Aorta (tissue), 5 donors: ENCODE measurements at regions of chr20 and their contacts with region 1.

Region 1: GRCh38 chr20:6828794-6829423 is 61.4 kb downstream of the BMP2 start:
- DNase-seq: peak in 1 of 2 donors; percentile 59
- ATAC-seq: peak; percentile 79
- H3K4me3 ChIP-seq: no peak overlapping the region
- H3K27ac ChIP-seq: no peak overlapping the region
- H3K4me1 ChIP-seq: no peaks in the 10 kb centered on the region
- H3K27me3 ChIP-seq: peaks cover 0 to 1% of the 10 kb centered on the region in 2 donors

Region 2: DNA sequence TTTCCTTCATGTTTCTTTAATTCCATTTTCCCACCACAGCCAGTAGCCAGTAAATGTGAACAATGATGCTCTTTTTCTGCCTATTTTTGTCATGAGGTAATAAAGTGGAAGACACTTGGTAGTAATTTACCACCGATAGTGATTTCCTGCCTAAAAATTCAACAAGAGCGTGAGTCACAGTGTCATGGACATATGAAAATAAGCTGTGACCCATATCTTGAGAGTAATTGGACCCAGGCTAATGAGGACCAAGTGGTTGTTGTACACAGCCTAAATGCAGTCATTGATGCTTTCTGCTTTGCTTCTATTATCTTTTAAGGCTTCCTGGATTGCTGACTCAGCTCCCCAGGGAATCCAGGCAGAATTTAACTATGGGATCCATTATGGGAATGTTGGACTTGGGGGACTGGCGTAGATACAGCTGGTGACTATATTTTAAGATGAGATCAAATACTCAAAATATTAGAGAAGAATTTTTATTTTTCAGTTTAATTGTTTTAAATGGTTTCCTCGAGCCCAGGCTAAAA is 440.2 kb before region 1 on chr20:
- intact Hi-C with region 1: no loop called
- DNase-seq: no peak
- ATAC-seq: no peak
- H3K4me3 ChIP-seq: no peak overlapping the region
- H3K27ac ChIP-seq: no peak overlapping the region
- H3K4me1 ChIP-seq: no peaks in the 10 kb centered on the region
- H3K27me3 ChIP-seq: no peaks in the 10 kb centered on the region

Region 3: GRCh38 chr20:6700563-6701329 is 128.2 kb before region 1 on chr20:
- intact Hi-C with region 1: no loop called
- DNase-seq: peak in 1 of 2 donors; percentile 87
- ATAC-seq: no peak
- H3K4me3 ChIP-seq: no peak overlapping the region
- H3K27ac ChIP-seq: no peak overlapping the region
- H3K4me1 ChIP-seq: peaks cover 2 to 6% of the 10 kb centered on the region in 2 donors
- H3K27me3 ChIP-seq: no peaks in the 10 kb centered on the region

Region 4: GRCh38 chr20:6786548-6786947 is 42.4 kb before region 1 on chr20:
- intact Hi-C with region 1: no loop called
- DNase-seq: no peak
- ATAC-seq: no peak
- H3K4me3 ChIP-seq: no peak overlapping the region
- H3K27ac ChIP-seq: no peak overlapping the region
- H3K4me1 ChIP-seq: no peaks in the 10 kb centered on the region
- H3K27me3 ChIP-seq: no peaks in the 10 kb centered on the region

Region 5: DNA sequence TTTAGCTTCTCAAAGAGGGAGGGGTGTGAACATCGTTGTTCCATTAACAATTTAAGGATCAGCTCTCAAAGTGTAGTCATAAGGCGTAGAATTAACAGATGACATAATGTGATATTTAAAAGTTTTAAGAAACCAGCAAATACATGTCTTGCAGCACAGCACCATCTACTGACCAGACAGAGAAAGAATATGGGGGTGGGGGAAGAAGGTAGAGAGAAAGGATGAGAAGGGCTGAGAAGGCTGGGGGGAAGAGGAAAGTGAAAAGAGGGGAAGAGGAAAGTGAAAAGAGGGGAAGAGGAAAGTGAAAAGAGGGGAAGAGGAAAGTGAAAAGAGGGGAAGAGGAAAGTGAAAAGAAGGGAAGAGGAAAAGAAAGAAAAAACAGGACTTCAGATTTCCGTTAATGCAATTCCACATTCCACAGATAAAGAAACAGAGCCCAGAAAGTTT is 1030.5 kb after region 1 on chr20:
- intact Hi-C with region 1: loop called (anchors 5 kb)
- DNase-seq: no peak
- ATAC-seq: peak; percentile 84
- H3K4me3 ChIP-seq: no peak overlapping the region
- H3K27ac ChIP-seq: no peak overlapping the region
- H3K4me1 ChIP-seq: no peaks in the 10 kb centered on the region
- H3K27me3 ChIP-seq: no peaks in the 10 kb centered on the region